ENCODE measurements at regions of chr17 and their contacts with region 1.

Region 1: DNA sequence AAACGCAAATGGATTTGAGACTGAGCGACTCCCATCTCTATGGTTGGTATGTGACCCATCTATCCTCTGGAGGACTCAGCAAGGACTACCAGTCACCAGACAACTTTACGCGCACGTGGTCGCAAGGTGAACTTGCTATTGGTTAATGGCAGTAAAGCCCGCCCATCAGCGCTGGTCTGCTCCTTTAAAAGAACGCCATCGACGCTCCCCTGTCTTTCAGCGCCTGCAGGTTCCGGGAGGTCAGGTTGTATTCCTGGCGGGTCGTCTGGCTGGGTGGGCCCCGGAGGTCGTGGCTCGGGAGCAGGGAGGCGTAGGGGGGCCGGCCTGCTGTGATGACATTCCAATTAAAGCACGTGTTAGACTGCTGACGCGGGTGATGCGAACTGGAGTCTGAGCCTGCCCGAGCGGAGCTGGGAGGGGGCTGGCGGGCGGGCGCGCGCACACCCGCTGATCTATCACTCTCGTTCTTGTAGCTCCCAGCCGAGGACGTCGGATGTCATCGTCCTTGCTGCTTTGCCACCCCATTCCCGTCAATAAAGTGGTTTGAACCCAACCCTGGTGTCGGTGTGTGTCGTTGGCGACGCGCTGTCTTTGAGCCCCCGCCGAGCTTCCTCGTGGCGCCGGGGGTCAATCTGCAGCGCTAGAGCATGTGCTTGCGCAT is 15.9 kb upstream of the ERN1 start:
- DNase-seq: peak; percentile 98
- H3K4me3 ChIP-seq: peak overlapping the region; percentile 61 to 91 (median 78)
- H3K27ac ChIP-seq: peak overlapping the region; percentile 93 to 97 (median 95)
- H3K4me1 ChIP-seq: peaks cover 5 to 51% (median 35%) of the 10 kb centered on the region in 6 donors
- H3K27me3 ChIP-seq: no peaks in the 10 kb centered on the region
- CTCF ChIP-seq: peak in 6 of 11 experiments; percentile 1 to 49 (median 30)
- POLR2A ChIP-seq: peak; percentile 69 to 99 (median 98)

Region 2: GRCh38 chr17:64281962-64282727 is 136.3 kb after region 1 on chr17:
- intact Hi-C with region 1: loop called (anchors 5 kb)
- DNase-seq: peak; percentile 80
- H3K4me3 ChIP-seq: peak overlapping the region in 1 of 8 donors; percentile 21
- H3K27ac ChIP-seq: peak overlapping the region in 5 of 8 donors; percentile 19 to 70 (median 62)
- H3K4me1 ChIP-seq: peaks cover 0 to 32% (median 23%) of the 10 kb centered on the region in 6 donors
- H3K27me3 ChIP-seq: no peaks in the 10 kb centered on the region
- CTCF ChIP-seq: peak; percentile 27 to 80 (median 69)
- POLR2A ChIP-seq: no peak

Measured in spleen (tissue), 13 donors.